AG04450 (cell line): ENCODE measurements at regions of chr3 and their contacts with region 1.

Region 1: GRCh38 chr3:45055411-45056143 is 29.5 kb downstream of the CLEC3B start:
- DNase-seq: peak; percentile 85
- H3K4me3 ChIP-seq: peak overlapping the region; percentile 26
- H3K27ac ChIP-seq: peak overlapping the region; percentile 92
- H3K27me3 ChIP-seq: no peaks in the 10 kb centered on the region
- CTCF ChIP-seq: peak; percentile 18

Region 2: GRCh38 chr3:45043728-45044299 is 11.8 kb before region 1 on chr3:
- CTCF ChIA-PET with region 1: interaction called, 29 read pairs
- POLR2A ChIA-PET with region 1: interaction called, 3 read pairs
- DNase-seq: peak; percentile 66
- H3K4me3 ChIP-seq: no peak overlapping the region
- H3K27ac ChIP-seq: peak overlapping the region; percentile 66
- H3K27me3 ChIP-seq: no peaks in the 10 kb centered on the region
- CTCF ChIP-seq: peak; percentile 52

Region 3: DNA sequence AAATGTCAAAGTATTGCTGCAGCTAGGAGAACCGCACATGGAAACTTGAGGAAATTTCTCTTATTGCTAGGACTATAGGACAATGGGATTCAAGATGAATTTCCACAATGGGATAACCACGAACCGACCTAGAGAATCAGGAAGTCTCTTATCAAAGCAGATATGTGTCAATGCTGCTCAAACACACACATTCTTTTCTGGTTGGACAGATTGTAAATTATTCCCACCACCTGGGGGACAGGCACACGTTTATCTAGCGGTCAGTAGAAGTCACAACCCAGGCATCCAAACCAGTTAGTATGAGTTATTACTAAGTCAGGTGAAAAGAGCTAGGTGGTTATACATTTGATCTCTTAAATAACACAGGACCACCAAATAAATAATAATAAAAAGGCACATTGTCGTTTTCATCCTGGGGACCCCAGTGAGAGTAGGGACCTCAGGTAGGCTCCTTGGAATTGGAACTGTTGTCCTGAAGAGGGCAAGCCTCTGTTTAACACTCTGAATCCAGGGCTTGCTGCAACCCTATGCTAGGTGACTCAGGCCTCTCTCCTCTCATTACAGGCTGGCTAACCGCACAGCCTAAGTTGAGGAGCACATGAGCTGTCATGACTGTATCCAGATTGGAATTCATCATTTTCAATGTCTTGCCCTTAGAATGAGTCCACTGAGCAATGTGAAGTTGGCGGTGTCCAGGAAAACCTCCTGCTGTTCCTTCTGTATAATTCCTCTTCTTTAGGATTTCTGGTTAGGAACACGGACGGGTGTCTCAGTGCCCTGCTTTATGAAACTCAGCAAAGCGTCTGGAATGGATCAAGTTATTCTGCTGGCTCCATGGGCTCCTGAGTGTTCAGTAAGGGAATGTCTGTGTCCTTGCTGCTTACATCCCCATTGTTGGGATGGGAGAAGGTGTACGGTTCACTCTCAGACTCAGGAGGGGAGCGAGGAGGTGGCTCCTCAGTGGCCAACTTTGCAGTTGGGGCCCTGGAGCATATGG is 29.5 kb after region 1 on chr3:
- CTCF ChIA-PET with region 1: no interaction called
- POLR2A ChIA-PET with region 1: interaction called, 10 read pairs
- DNase-seq: peak; percentile 85
- H3K4me3 ChIP-seq: no peak overlapping the region
- H3K27ac ChIP-seq: peak overlapping the region; percentile 84
- H3K27me3 ChIP-seq: no peaks in the 10 kb centered on the region
- CTCF ChIP-seq: peak; percentile 17; the same call in 1 of the 2 replicates

Region 4: DNA sequence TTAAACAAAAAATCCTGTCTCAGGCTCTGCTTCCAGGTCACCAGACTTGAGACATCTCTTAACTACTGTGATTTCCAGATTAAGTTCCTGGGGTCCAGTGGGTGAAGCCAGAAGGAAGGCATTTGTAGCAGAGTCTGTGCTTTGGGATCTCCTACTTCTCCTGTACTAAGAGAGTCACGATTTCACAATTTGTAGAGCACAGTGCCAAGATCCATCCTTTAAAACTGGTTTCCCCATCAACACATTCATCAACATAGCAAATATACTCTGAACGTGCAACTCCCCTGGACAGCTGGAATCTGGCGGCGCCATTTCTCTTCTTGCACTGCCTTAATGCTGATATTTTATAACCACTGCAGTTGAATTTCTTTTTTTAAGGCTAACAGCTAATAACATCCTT is 57.4 kb after region 1 on chr3:
- CTCF ChIA-PET with region 1: no interaction called
- POLR2A ChIA-PET with region 1: no interaction called
- DNase-seq: no peak
- H3K4me3 ChIP-seq: no peak overlapping the region
- H3K27ac ChIP-seq: peak overlapping the region; percentile 3
- H3K27me3 ChIP-seq: no peaks in the 10 kb centered on the region
- CTCF ChIP-seq: no peak

Region 5: DNA sequence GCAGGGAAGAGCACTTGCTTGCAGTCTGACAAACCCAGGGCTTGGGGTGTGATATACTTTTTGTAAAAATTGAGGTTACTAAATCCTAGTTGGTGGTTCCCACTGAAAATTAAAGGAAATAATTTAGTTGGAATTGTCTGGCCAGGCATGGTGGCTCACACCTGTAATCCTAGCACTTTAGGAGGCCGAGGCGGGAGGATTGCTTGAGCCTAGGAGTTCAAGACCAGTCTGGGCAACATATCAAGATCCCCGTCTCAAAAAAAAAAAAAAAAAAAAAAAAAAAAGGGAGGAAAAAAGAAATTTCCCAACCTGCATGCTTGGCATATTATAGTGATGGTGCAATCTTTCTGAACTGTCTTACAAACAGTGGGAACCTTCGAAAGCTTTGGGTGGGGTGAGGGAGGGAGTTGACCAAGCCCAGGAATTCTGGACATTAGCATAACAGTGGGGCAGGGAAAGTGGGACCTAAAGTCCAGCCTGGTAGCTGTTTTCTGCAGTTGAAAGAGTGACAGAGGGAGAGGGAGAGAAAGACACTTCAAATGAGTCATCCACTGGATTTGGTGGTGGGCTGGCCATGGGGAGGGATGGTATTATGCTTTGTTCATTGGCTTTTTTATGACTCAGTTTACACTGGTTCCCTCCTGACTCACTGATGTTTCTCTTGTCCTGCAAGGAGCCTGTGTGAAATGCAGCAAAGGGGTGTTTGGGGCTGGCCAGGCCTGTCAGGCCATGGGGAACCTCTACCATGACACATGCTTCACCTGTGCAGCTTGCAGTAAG is 580.1 kb after region 1 on chr3:
- CTCF ChIA-PET with region 1: no interaction called
- POLR2A ChIA-PET with region 1: interaction called, 19 read pairs
- DNase-seq: peak; percentile 52
- H3K4me3 ChIP-seq: no peak overlapping the region
- H3K27ac ChIP-seq: peak overlapping the region; percentile 66
- H3K27me3 ChIP-seq: no peaks in the 10 kb centered on the region
- CTCF ChIP-seq: no peak